ENCODE measurements at regions of chr15 and their contacts with region 1.

Region 1: GRCh38 chr15:85504749-85505676 is 124.6 kb downstream of the AKAP13 start:
- DNase-seq: no peak
- H3K4me3 Mint-ChIP-seq: no peak overlapping the region
- H3K27ac Mint-ChIP-seq: peak overlapping the region; percentile 54
- H3K4me1 Mint-ChIP-seq: peaks cover 54% of the 10 kb centered on the region
- H3K27me3 Mint-ChIP-seq: no peaks in the 10 kb centered on the region

Region 2: DNA sequence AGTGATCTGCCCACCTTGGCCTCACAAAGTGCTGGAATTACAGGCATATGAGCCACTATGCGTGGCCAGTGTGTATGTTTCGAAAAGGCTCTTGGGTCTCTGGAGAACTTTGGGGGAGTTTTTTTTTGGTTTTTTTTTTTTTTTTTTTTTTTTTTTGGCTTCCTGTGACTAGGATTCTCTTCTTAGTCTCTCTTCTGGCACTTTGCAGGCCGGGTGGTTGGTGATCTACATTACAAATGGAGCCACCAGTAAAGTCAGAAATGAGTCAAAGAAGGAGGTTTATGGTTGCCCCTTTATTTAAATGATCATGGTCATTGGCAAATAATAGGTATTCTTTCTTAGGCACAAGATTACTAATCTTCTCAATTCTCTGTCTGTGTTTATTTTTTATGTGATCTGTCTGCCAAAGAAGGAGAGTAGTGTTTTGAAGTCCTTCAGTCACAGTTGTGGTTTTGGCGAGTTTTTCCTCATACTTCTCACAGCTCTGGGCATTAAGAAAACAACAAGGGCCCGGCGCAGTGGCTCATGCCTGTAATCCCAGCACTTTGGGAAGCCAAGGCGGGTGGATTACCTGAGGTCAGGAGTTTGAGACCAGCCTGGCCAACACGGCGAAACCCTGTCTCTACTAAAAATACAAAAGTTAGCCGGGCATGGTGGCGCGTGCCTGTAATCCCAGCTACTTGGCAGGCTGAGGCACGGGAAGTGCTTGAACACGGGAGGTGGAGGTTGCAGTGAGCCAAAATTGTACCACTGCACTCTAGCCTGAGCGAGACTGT is 485.0 kb before region 1 on chr15:
- intact Hi-C with region 1: no loop called
- DNase-seq: no peak
- H3K4me3 Mint-ChIP-seq: no peak overlapping the region
- H3K27ac Mint-ChIP-seq: no peak overlapping the region
- H3K4me1 Mint-ChIP-seq: peaks cover 15% of the 10 kb centered on the region
- H3K27me3 Mint-ChIP-seq: no peaks in the 10 kb centered on the region

Region 3: DNA sequence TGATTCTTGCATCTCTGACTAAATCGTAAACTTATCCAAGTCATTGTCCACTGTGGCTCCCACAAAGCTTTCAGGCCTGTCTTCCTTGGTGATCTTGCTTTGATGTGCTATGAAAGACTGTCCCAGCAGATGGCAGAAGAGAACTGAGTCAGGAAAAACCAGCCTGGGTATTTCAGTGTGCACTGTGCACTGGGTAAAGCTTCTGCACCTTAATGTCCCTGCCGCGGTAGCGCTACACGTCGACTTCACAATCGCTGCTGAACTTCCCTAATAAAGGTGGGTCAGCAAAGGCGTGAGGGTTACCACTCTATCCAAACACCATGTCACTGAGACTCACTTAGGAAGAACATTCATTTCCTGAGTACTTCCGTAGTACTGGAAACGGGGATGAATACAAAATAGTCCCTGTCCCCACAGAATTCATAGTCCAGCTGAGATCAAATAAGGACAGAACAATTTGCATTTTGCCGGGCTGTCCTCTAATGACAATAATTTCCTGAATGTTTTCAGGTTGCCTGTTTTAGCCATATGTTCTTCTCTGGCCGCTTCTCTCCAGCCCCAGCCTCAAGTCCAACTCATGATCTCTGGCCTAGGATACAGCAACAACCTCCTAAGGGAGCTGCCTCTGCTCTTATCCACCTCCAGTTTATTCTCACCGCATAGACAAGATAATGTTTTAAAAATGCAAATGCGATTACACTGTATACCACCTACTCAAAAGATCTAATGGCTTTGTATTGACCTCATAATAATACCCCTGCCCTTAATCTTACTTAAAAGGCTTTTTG is 208.2 kb before region 1 on chr15:
- intact Hi-C with region 1: loop called (anchors 1 kb)
- DNase-seq: peak; percentile 65
- H3K4me3 Mint-ChIP-seq: peak overlapping the region; percentile 28
- H3K27ac Mint-ChIP-seq: peak overlapping the region; percentile 8
- H3K4me1 Mint-ChIP-seq: peaks cover 19% of the 10 kb centered on the region
- H3K27me3 Mint-ChIP-seq: peaks cover 7% of the 10 kb centered on the region

Region 4: GRCh38 chr15:85475317-85475701 is 29.7 kb before region 1 on chr15:
- intact Hi-C with region 1: no loop called
- DNase-seq: no peak
- H3K4me3 Mint-ChIP-seq: no peak overlapping the region
- H3K27ac Mint-ChIP-seq: no peak overlapping the region
- H3K4me1 Mint-ChIP-seq: peaks cover 45% of the 10 kb centered on the region
- H3K27me3 Mint-ChIP-seq: no peaks in the 10 kb centered on the region

Region 5: DNA sequence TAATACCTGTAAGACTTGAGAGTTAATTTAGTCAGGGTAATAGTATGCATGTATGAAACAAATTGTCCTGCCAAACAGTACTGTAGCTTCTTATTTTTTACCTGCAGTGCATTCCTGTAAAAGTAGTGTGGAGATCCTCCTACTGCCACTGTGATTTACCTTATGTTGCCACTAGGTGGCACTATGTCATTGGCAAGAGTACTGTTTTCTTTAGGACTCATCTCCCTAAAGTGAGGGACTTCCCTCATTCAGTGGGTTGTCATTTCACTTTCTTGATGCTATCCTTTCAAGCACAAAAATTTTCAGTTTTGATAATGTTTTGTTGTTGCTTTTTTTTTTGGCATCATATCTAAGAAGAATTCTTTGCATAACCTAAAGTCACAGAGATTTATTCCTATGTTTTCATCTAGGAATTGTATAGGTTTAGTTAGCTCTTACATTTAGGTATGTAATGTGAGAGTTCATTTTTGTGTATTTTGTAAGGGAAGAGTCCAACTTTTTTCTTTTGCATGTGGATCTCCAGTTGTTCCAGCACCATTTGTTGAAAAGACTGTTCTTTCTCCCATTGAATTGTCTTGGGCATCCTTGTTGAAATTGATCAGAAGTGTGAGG is 19.0 kb before region 1 on chr15:
- intact Hi-C with region 1: loop called (anchors 2 kb)
- DNase-seq: peak; percentile 40
- H3K4me3 Mint-ChIP-seq: no peak overlapping the region
- H3K27ac Mint-ChIP-seq: no peak overlapping the region
- H3K4me1 Mint-ChIP-seq: peaks cover 60% of the 10 kb centered on the region
- H3K27me3 Mint-ChIP-seq: no peaks in the 10 kb centered on the region

Region 6: GRCh38 chr15:85534031-85534430 is 29.0 kb after region 1 on chr15:
- intact Hi-C with region 1: no loop called
- DNase-seq: peak; percentile 16
- H3K4me3 Mint-ChIP-seq: peak overlapping the region; percentile 19
- H3K27ac Mint-ChIP-seq: peak overlapping the region; percentile 71
- H3K4me1 Mint-ChIP-seq: peaks cover 28% of the 10 kb centered on the region
- H3K27me3 Mint-ChIP-seq: no peaks in the 10 kb centered on the region

Region 7: DNA sequence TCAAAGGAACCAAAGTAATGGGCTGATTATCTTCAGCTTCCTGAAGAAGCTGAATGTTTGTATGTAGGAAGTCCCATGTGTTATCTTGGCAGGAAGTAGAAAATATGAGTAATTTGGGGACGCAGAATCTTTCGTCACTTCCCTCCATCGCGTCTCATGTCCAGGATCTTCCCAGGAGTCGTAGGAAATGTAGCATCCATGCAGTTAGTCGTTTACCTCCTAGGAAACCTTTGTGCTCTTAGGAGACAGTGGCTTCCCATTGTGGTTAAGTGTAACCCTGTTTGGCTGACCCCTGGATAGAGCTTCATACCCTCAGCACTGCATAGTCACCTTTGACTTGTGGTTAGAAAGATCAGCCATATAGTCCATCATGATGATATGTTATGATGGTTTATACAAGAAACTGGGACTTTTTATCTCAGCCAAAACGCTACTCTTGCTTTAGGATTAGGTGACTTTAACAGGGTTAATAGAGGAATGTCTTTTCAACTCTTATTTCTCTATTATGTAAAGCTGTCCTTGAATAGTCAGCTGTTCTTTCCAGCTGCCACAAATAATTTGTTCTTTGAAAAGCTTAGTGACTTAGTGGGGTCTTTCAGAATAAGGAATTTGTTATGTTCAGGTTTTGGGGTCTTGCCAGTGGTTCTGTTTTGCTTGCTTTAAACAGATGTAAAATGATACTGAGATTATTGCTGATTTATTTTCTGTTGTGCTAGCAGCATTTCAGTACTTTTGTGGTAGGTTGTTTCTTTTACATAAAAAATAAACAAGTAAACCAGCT is 197.5 kb after region 1 on chr15:
- intact Hi-C with region 1: loop called (anchors 5 kb)
- DNase-seq: peak; percentile 39
- H3K4me3 Mint-ChIP-seq: peak overlapping the region; percentile 77
- H3K27ac Mint-ChIP-seq: peak overlapping the region; percentile 99
- H3K4me1 Mint-ChIP-seq: peaks cover 51% of the 10 kb centered on the region
- H3K27me3 Mint-ChIP-seq: no peaks in the 10 kb centered on the region

Measured in activated T-helper 2 cell treated with anti-CD3 and anti-CD28 coated beads, Interferon-gamma antibody, Interleukin-2, Interleukin-4, amounts not matched to agents 10 μg/mL and 5 μg/mL and 100 μg/mL, durations not matched to agents 14 hours and 24 hours and 36 hours (primary cell).